A549 (cell line): ENCODE measurements at regions of chr15 and their contacts with region 1.

Region 1: GRCh38 chr15:100141311-100142001 is 200.3 kb downstream of the ADAMTS17 start:
- DNase-seq: no peak
- ATAC-seq: peak in 1 of 2 experiments; percentile 36; a peak in 1 of 6 replicates
- H3K4me3 ChIP-seq: no peak overlapping the region
- H3K27ac ChIP-seq: no peak overlapping the region
- H3K4me1 ChIP-seq: no peaks in the 10 kb centered on the region
- CTCF ChIP-seq: no peak
- EP300 ChIP-seq: no peak
- POLR2A ChIP-seq: no peak
- RAD21 ChIP-seq: no peak

Region 2: DNA sequence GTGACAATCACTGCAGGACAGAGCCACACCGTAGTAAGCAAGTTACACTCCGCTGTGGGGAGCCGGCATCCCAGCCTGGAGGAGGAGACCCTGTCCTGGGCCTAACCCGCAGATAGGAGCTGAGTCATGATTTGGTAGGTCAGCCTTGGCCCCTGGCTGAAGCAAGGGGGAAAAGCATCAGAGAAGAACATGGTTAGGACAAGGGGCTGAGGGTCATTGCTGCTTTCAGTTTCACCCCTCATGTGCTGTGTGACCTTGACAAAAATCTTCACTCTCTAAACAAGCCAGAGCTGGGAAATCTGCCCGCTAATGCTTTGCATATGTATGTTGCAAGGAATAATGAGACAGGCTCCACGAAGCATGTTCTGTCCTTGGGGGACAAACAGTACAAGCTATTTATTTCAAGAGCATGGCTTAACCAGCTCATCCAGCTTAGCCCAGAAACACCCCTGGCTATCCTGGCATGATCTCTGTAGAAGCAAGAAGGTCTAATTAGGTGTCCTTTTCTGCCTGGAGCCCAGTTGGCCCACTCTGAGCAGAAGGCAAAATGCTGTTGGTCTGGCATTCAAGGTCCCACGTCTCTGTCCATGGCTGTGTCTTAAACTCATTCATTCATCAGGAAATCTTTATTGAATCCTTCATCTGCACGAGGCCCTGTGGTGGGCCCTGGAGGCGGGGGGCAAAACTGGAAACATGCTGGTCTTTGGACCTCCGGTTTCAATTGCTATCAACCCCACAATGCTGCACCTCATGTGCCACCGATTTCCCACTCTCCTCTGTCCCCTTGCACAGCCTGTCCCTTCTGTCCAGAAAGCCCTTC is 186.9 kb before region 1 on chr15:
- CTCF ChIA-PET with region 1: no interaction called
- POLR2A ChIA-PET with region 1: no interaction called
- DNase-seq: no peak
- ATAC-seq: no peak
- H3K4me3 ChIP-seq: no peak overlapping the region
- H3K27ac ChIP-seq: no peak overlapping the region
- H3K4me1 ChIP-seq: no peaks in the 10 kb centered on the region
- CTCF ChIP-seq: no peak
- EP300 ChIP-seq: no peak
- POLR2A ChIP-seq: no peak
- RAD21 ChIP-seq: no peak

Region 3: DNA sequence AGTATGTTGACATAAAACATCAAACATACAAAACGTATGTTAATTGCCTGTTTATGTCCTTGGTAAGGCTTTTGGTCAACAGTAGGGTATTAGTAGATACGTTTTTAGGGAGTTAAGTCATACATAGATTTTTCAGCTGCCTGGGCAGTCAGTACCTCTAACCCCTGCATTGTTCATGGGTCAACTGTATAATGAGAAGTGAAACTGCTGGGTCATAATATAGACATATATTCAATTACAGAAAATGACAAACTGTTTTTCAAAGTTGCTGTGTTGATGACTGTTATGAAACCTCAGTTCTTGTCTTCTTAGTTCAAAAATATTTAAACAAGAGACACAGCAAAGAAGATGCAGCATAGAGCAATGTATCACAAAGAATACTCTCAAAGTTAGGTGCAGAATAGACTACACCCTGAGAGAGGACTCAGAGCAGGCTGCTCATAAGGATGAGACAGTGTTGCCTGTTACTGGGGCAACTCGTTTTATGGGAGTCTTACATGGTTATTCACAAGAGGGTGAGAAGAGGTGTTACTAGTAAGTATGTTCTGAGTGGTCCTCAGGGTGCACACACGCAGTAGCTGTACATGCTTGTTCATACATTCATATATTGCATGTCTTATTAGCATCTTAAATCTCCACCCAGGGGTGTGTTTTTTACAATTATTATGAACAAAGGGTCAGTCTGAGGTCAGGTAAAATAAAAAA is 253.4 kb after region 1 on chr15:
- CTCF ChIA-PET with region 1: no interaction called
- POLR2A ChIA-PET with region 1: interaction called, 10 read pairs
- DNase-seq: no peak
- ATAC-seq: no peak
- H3K4me3 ChIP-seq: no peak overlapping the region
- H3K27ac ChIP-seq: no peak overlapping the region
- H3K4me1 ChIP-seq: no peaks in the 10 kb centered on the region
- CTCF ChIP-seq: no peak
- EP300 ChIP-seq: no peak
- POLR2A ChIP-seq: no peak
- RAD21 ChIP-seq: no peak